WTC11 (cell line): ENCODE measurements at regions of chr10 and their contacts with region 1.

Region 1: DNA sequence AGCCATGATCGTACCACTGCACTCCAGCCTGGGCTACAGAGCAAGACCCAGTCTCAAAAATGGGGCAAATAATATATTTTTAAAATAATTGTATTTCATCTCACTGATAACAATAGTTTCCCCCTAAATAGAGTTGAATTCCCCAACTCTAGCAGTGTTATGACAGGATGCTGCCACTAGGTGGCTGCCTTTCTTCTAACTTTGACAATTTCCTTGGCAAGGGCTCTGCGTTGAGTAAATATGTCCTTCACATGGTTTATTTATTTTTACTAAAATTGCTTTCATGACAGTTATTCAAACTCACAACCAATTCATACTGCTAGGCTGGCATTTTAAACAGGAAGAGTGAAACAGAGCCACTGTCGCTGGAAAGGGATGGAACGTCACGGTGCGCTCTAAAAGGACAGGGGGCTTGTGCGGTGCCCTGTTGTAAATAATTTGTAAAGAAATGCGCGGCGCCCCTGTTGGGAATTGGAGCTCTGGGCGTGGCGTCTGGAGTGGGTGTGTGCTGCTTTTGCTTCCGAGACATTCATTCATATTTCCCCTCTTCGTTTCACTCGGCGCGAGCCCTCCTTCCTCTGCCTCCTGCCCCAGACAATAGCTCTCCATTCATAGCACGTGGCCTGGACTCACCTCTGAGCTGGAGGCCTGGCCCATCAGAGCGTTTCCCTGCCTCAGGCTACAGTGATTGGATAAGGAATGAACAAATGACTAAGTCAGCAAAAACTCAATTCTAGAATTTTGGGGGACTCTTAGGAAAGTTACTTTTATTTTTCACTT is 20.5 kb upstream of the PITRM1 start:
- DNase-seq: peak; percentile 48
- ATAC-seq: 0 out of 2 replicates have a peak, but pooled peaks have one; percentile 14
- H3K4me3 Mint-ChIP-seq: no peak overlapping the region
- H3K27ac Mint-ChIP-seq: no peak overlapping the region
- H3K4me1 Mint-ChIP-seq: peaks cover 18% of the 10 kb centered on the region
- H3K27me3 Mint-ChIP-seq: peaks cover 8% of the 10 kb centered on the region
- CTCF ChIP-seq: peak; percentile 83

Region 2: DNA sequence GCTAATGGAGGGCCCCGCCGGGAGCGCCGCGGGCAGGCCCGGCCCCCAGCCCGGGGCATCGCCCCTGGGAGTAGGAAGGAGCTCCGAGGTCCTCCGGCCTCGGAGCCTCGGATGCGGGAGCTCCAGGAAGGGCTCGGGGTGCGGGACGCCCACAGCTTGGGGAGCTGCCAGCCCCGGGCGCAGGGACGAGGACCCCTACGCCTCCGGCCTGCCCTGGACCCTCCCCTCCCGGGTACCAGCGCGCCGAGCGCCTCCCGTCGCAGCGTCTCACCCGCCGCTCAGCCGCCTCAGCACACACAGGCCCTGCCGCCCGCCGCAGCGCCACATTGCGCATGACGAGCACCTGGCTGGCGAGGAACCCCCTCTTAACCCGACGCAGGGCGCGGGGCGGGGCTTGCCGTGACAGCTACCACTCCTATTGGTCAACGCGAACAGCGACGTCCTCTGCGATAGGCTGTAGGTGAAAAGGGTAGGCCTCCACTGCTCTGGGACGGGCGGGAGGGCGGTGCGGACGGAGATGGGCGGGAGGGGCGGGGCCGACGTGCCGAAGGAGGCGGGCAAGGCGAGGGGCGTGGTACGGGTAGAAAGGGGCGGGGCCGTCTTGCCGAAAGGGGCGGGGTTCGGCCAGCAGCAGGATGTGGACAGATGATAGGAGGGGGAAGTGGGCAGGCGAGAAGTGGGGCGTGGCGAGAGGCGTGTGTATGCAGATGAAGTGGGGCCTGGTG is 20.4 kb before region 1 on chr10 and contains the start of gene PITRM1:
- CTCF ChIA-PET with region 1: interaction called, 25 read pairs
- POLR2A ChIA-PET with region 1: no interaction called
- DNase-seq: peak; percentile 99
- ATAC-seq: peak; percentile 85
- H3K4me3 Mint-ChIP-seq: peak within 1 kb of the TSS; percentile 83
- H3K27ac Mint-ChIP-seq: peak within 1 kb of the TSS; percentile 88
- H3K4me1 Mint-ChIP-seq: peaks cover 19% of the 10 kb centered on the region
- H3K27me3 Mint-ChIP-seq: no peaks in the 10 kb centered on the region
- CTCF ChIP-seq: no peak
- total RNA-seq, gene PITRM1: 37.2 to 40.7 TPM (median 37.5 TPM) in 3 replicates